Endothelial cell of umbilical vein (primary cell): ENCODE measurements at regions of chr3 and their contacts with region 1.

Region 1: DNA sequence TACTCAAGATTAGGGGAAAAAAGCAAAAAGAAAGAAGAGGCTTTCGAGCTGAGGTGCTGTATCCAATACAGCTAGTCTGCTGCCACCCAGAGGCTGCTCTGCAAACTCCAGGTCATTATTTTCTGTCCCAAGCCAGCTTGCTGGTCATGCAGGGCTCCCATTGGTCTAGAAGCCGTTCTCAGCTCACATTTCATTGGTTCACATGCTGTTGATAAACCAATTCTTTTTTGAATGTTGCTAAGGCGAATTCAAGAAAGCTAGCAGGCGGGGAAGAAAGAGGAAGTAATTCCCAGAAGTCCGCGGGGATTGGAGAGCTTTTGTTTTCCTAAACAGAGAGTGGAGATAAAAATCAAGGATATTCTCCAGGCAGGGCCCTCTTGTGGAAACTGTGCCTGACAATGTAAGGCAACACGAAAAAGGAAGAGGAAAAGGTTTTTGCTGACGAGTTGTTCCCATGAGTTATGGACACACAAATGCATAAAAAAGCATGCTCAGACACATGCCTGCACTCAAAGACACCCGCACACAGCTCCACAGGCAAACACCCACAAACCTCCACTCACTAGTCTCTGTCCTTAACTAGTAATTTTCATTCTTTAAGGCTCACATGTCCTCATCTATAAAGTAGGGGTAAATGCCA is 33.4 kb downstream of the FSTL1 start:
- DNase-seq: peak; percentile 100
- H3K4me3 ChIP-seq: peak overlapping the region in 2 of 3 experiments; percentile 12 to 24
- H3K27ac ChIP-seq: peak overlapping the region; percentile 75
- H3K4me1 ChIP-seq: peaks cover 29% of the 10 kb centered on the region
- H3K27me3 ChIP-seq: no peaks in the 10 kb centered on the region
- CTCF ChIP-seq: peak; percentile 79 to 96
- POLR2A ChIP-seq: no peak

Region 2: GRCh38 chr3:120214161-120214560 is 203.2 kb before region 1 on chr3:
- CTCF ChIA-PET with region 1: no interaction called
- POLR2A ChIA-PET with region 1: no interaction called
- dilution Hi-C with region 1: no loop called
- intact Hi-C with region 1: no loop called
- DNase-seq: no peak
- H3K4me3 ChIP-seq: no peak overlapping the region
- H3K27ac ChIP-seq: no peak overlapping the region
- H3K4me1 ChIP-seq: no peaks in the 10 kb centered on the region
- H3K27me3 ChIP-seq: peaks cover 6 to 17% of the 10 kb centered on the region in 2 experiments
- CTCF ChIP-seq: no peak
- POLR2A ChIP-seq: no peak

Region 3: DNA sequence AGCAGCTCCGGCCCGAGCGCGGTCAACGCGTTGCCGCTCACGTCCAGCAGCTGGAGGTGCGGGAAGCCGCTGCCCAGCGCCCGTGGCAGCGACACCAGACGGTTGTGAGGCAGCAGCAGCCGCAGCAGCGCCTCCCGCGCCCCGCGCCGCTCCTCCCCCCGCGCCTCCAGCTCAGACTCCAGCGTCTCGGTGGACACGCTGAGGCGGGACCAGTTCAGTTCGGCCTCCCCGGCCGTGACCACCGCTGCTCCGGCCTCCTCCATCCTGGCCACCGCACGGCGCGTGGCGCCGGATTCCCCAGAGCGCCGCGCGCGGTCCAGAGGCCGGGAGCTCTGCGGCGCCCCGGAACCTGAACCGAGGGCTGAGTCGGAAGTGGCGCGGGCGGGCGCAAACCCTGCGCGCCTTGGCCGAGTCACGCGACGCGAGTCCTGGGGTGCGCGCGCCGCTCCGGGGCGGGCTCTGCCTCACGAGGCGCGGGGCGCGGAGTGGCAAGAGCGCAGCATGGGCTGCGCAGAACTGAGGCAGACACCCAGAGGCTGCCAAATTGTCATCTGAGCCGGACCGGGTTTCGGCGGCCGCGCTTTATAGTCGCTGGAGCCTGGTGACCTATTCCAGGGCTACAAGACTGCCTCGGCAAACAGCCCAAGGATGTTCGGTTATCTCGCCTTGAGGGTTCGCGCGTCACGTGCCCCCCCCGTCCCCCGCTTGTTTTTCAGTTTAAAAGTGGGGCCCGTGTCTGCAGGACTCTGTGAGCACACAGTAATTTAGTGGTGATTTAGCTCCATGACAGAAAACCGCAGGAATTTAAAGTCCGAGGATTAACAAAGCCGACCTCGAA is 68.2 kb before region 1 on chr3 and contains the start of gene LRRC58:
- CTCF ChIA-PET with region 1: interaction called, 16 read pairs
- POLR2A ChIA-PET with region 1: no interaction called
- dilution Hi-C with region 1: no loop called
- intact Hi-C with region 1: loop called (anchors 1 kb)
- DNase-seq: peak; percentile 88
- H3K4me3 ChIP-seq: peak within 1 kb of the TSS; percentile 34 to 76 (median 59)
- H3K27ac ChIP-seq: peak within 1 kb of the TSS; percentile 67
- H3K4me1 ChIP-seq: peaks cover 14% of the 10 kb centered on the region
- H3K27me3 ChIP-seq: peaks cover 5% of the 10 kb centered on the region in 2 experiments
- CTCF ChIP-seq: peak; percentile 5 to 49
- POLR2A ChIP-seq: peak; percentile 81
- total RNA-seq, gene LRRC58: 11.9 and 12.3 TPM in 2 replicates

Region 4: DNA sequence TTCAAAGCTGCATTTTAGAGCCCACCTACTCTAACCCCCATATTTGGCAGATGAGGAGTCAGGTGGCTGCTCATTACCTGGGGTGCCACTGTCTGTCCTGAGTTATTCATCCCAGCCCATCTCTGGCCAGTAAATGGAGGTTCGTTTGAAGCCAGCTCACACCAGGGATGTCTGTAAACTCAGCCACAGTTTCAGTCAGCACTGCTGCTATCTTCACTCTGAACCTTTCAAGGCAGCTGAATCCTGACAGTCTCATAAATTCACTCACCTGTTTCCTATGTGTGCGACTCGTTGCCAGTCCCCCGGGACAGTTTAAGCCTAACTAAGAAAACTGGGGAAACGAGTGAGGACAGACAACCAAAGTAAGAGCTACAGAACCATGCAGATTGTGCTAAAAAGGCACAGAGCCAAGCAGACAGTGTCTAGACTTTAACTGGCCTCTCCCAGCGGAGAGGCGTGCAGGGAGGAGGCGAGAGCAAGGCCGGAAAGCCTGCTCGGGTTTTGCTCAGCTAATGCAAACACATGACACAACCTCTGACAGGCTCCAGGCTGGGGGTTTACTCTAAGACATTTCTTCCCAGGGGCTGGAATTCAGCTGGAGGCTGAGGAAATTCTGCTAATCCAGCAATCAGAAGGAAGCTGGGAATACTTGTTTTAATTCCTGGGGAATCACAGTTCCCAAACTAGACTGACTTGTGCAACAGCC is 21.4 kb after region 1 on chr3:
- CTCF ChIA-PET with region 1: interaction called, 367 read pairs
- POLR2A ChIA-PET with region 1: interaction called, 3 read pairs
- dilution Hi-C with region 1: no loop called
- intact Hi-C with region 1: loop called (anchors 1 kb)
- DNase-seq: peak; percentile 95
- H3K4me3 ChIP-seq: no peak overlapping the region
- H3K27ac ChIP-seq: peak overlapping the region; percentile 91
- H3K4me1 ChIP-seq: peaks cover 66% of the 10 kb centered on the region
- H3K27me3 ChIP-seq: no peaks in the 10 kb centered on the region
- CTCF ChIP-seq: no peak
- POLR2A ChIP-seq: no peak

Region 5: GRCh38 chr3:120506828-120507774 is 89.7 kb after region 1 on chr3:
- CTCF ChIA-PET with region 1: interaction called, 40 read pairs
- POLR2A ChIA-PET with region 1: no interaction called
- dilution Hi-C with region 1: no loop called
- intact Hi-C with region 1: loop called (anchors 1 kb)
- DNase-seq: peak; percentile 74
- H3K4me3 ChIP-seq: no peak overlapping the region
- H3K27ac ChIP-seq: peak overlapping the region; percentile 15
- H3K4me1 ChIP-seq: peaks cover 17% of the 10 kb centered on the region
- H3K27me3 ChIP-seq: no peaks in the 10 kb centered on the region
- CTCF ChIP-seq: peak; percentile 71 to 74
- POLR2A ChIP-seq: no peak